ENCODE measurements at regions of chr2 and their contacts with region 1.

Region 1: GRCh38 chr2:119678998-119679710 is at the start of gene TMEM177:
- DNase-seq: peak; percentile 72 to 96 (median 87)
- ATAC-seq: peak; percentile 91
- H3K4me3 ChIP-seq: peak within 1 kb of the TSS; percentile 95
- H3K4me3 Mint-ChIP-seq: peak within 1 kb of the TSS; percentile 87 to 96 (median 90)
- H3K27ac ChIP-seq: peak within 1 kb of the TSS; percentile 88
- H3K27ac Mint-ChIP-seq: peak within 1 kb of the TSS; percentile 58 to 99 (median 97)
- H3K4me1 ChIP-seq: peaks cover 0 to 15% of the 10 kb centered on the region in 2 donors
- H3K4me1 Mint-ChIP-seq: peaks cover 25 to 48% (median 38%) of the 10 kb centered on the region in 7 donors
- H3K27me3 ChIP-seq: no peaks in the 10 kb centered on the region
- H3K27me3 Mint-ChIP-seq: peaks cover 0 to 21% (median 0%) of the 10 kb centered on the region in 5 donors
- total RNA-seq, gene TMEM177: 5.5 to 38.1 (median 11.6) TPM

Region 2: DNA sequence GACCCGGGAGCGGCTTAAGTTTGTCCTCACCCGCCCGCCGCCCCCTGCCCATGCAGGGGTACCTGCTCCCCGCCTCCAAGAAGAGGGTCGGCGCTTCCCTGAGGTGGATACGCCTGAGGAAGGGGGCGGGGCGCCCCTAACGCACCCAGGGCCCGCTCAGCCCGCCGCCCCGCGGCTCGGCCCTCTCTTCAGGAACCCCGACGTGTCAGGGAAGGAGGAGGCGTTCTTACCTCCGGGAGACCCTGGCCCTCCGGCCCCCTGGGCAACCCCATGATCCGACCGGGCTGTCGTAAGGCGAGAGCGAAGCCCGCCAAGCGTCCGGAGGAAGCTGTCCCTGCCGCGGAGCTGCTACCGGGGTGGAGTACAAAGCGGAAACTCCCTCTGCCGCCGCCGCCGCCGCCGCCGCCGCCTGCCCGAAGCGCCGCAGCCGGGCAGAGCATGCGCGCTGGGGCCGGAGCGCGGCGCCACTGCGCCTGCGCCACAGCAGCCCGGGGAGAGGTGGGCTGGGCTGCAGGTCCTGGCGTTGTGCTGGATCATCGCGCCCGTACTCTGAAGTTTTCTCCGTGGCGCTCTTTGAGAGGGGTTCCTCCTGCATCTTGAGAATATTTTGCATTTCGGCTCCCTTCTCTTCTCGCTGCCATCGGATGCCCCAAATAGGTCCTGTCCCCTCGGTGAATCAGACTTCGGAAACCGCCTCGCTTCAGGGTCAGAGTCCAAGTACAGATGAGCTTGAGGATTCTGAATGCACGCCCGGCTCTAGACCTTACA is 1665.2 kb before region 1 on chr2 and contains the start of gene CCDC93:
- CTCF ChIA-PET with region 1: no interaction called
- POLR2A ChIA-PET with region 1: no interaction called
- intact Hi-C with region 1: loop called in 1 of 2 experiments (anchors 10 kb)
- DNase-seq: peak; percentile 82 to 95 (median 91)
- ATAC-seq: peak; percentile 88
- H3K4me3 ChIP-seq: peak within 1 kb of the TSS; percentile 90
- H3K4me3 Mint-ChIP-seq: peak within 1 kb of the TSS; percentile 87 to 98 (median 95)
- H3K27ac ChIP-seq: peak within 1 kb of the TSS; percentile 98
- H3K27ac Mint-ChIP-seq: peak within 1 kb of the TSS; percentile 59 to 96 (median 90)
- H3K4me1 ChIP-seq: peaks cover 6 to 9% of the 10 kb centered on the region in 2 donors
- H3K4me1 Mint-ChIP-seq: peaks cover 30 to 69% (median 41%) of the 10 kb centered on the region in 7 donors
- H3K27me3 ChIP-seq: no peaks in the 10 kb centered on the region
- H3K27me3 Mint-ChIP-seq: peaks cover 0 to 6% (median 1%) of the 10 kb centered on the region in 5 donors
- total RNA-seq, gene CCDC93: 34.8 to 73.9 (median 51.5) TPM

Region 3: GRCh38 chr2:118186110-118186857 is 1492.9 kb before region 1 on chr2:
- CTCF ChIA-PET with region 1: no interaction called
- POLR2A ChIA-PET with region 1: interaction called, 3 read pairs
- intact Hi-C with region 1: loop called in 1 of 2 experiments (anchors 5 kb)
- DNase-seq: peak; percentile 77 to 91 (median 86)
- ATAC-seq: peak; percentile 97
- H3K4me3 ChIP-seq: peak overlapping the region; percentile 81
- H3K4me3 Mint-ChIP-seq: peak overlapping the region; percentile 89 to 98 (median 94)
- H3K27ac ChIP-seq: peak overlapping the region; percentile 74
- H3K27ac Mint-ChIP-seq: peak overlapping the region; percentile 88 to 98 (median 90)
- H3K4me1 ChIP-seq: peaks cover 6 to 9% of the 10 kb centered on the region in 2 donors
- H3K4me1 Mint-ChIP-seq: peaks cover 7 to 25% (median 21%) of the 10 kb centered on the region in 7 donors
- H3K27me3 ChIP-seq: no peaks in the 10 kb centered on the region
- H3K27me3 Mint-ChIP-seq: peaks cover 0 to 2% (median 0%) of the 10 kb centered on the region in 5 donors

Region 4: DNA sequence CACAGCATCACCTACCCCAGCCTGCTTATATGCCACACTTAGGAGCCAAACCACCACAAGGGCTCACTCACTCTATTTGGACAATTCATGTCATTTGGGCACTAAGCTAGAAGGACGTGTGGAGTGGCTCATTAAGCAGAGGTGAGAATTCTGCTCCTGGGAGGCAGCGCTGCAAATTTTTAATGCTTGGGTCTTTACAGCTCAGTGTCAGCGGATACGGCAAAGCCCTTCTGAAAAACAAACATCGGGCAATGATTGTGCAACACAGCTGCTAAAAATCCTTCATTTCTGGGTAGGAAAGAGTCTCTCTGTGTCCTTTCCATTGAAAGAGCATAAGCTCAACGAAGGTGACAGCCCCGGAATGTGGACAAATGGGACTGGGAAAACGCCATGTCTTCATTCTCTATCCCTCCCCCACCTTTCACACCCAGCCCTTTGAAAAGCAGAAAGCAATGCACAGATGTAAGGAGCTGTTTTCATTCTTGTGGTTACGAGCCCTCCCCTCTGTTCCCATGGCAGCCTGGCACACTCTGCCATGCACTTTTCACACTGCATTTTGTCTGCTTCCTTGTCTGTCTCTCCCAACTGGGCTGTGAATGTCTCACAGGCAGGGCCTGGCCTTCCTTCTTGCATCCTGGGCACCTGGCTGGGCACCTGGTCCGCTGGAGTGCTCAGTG is 15.8 kb after region 1 on chr2:
- CTCF ChIA-PET with region 1: interaction called, 11 read pairs
- POLR2A ChIA-PET with region 1: interaction called, 67 read pairs
- intact Hi-C with region 1: loop called (anchors 1 to 2 kb)
- DNase-seq: peak in 7 of 9 donors; percentile 62 to 79 (median 72)
- ATAC-seq: peak; percentile 74
- H3K4me3 ChIP-seq: peak overlapping the region; percentile 53
- H3K4me3 Mint-ChIP-seq: peak overlapping the region in 9 of 10 donors; percentile 74 to 91 (median 89)
- H3K27ac ChIP-seq: peak overlapping the region; percentile 56
- H3K27ac Mint-ChIP-seq: peak overlapping the region in 8 of 9 donors; percentile 83 to 97 (median 92)
- H3K4me1 ChIP-seq: peaks cover 0 to 50% of the 10 kb centered on the region in 2 donors
- H3K4me1 Mint-ChIP-seq: peaks cover 17 to 60% (median 55%) of the 10 kb centered on the region in 7 donors
- H3K27me3 ChIP-seq: no peaks in the 10 kb centered on the region
- H3K27me3 Mint-ChIP-seq: no peaks in the 10 kb centered on the region

Region 5: GRCh38 chr2:120223034-120223912 is 544.1 kb after region 1 on chr2 and contains the start of gene TMEM185B:
- CTCF ChIA-PET with region 1: no interaction called
- POLR2A ChIA-PET with region 1: interaction called, 3 read pairs
- intact Hi-C with region 1: loop called (anchors 1 kb)
- DNase-seq: peak; percentile 83 to 96 (median 90)
- ATAC-seq: peak; percentile 97
- H3K4me3 ChIP-seq: peak within 1 kb of the TSS; percentile 74
- H3K4me3 Mint-ChIP-seq: peak within 1 kb of the TSS; percentile 83 to 91 (median 88)
- H3K27ac ChIP-seq: peak within 1 kb of the TSS; percentile 94
- H3K27ac Mint-ChIP-seq: peak within 1 kb of the TSS; percentile 85 to 92 (median 91)
- H3K4me1 ChIP-seq: peaks cover 20 to 23% of the 10 kb centered on the region in 2 donors
- H3K4me1 Mint-ChIP-seq: peaks cover 34 to 67% (median 56%) of the 10 kb centered on the region in 7 donors
- H3K27me3 ChIP-seq: no peaks in the 10 kb centered on the region
- H3K27me3 Mint-ChIP-seq: no peaks in the 10 kb centered on the region
- total RNA-seq, gene TMEM185B: 14.9 to 36.8 (median 19.5) TPM

Measured in naive thymus-derived CD4-positive, alpha-beta T cell (primary cell).